ENCODE measurements at regions of chr16 and their contacts with region 1.

Region 1: GRCh38 chr16:12067714-12068401 is 91.3 kb downstream of the SNX29 start:
- DNase-seq: peak in 11 of 14 experiments; percentile 18 to 83 (median 52)
- ATAC-seq: peak; percentile 92
- H3K4me3 ChIP-seq: no peak overlapping the region
- H3K4me3 Mint-ChIP-seq: no peak overlapping the region
- H3K27ac ChIP-seq: no peak overlapping the region
- H3K27ac Mint-ChIP-seq: no peak overlapping the region
- H3K4me1 ChIP-seq: peaks cover 5% of the 10 kb centered on the region
- H3K4me1 Mint-ChIP-seq: peaks cover 11% of the 10 kb centered on the region
- H3K27me3 ChIP-seq: no peaks in the 10 kb centered on the region
- H3K27me3 Mint-ChIP-seq: no peaks in the 10 kb centered on the region
- CTCF ChIP-seq: peak; percentile 94

Region 2: DNA sequence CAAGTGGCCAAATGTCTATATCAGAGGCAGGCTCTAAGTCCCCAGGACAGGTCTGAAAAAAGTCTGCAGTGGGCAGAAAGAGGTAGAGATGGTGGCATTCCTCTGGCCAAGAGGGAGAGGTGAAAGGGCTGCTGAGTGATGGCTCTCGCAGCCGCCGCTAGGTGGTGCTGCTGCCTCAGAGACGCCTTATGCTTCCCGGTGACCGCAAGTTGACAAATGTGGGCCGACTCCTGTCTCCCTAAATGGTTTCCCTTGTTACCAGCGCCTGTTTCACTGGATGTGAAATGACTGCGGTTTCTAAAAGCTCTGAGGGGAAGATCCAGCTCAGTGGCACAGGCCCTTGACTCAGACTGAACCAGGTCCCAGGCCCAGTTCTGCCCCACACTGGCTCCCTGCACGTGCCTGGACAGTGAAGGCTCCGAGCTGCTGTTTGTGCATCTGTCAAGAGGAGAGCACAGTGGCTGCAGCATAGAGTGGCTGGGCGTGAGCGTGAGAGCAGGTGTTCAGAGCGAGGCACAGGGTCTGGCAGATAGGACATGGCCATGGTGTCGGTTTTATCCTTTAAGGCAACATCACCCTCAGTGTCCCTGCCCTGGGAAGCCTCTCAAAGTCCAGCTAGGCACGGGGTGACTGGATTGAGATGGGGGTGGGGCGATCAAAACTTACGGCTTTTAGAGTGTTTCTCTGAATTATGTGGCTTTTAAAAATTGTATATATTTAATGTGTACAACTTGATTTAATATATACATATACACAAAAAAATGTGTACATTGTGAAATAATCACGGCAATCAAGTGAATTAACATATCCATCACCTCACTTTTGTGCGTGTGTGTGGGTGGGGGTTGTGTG is 1103.6 kb before region 1 on chr16:
- CTCF ChIA-PET with region 1: no interaction called
- POLR2A ChIA-PET with region 1: no interaction called
- intact Hi-C with region 1: loop called in 1 of 2 experiments (anchors 1 kb)
- DNase-seq: peak; percentile 65 to 91 (median 78)
- ATAC-seq: peak; percentile 49
- H3K4me3 ChIP-seq: peak overlapping the region; percentile 9
- H3K4me3 Mint-ChIP-seq: peak overlapping the region; percentile 38
- H3K27ac ChIP-seq: no peak overlapping the region
- H3K27ac Mint-ChIP-seq: peak overlapping the region; percentile 76
- H3K4me1 ChIP-seq: peaks cover 28% of the 10 kb centered on the region
- H3K4me1 Mint-ChIP-seq: peaks cover 30% of the 10 kb centered on the region
- H3K27me3 ChIP-seq: no peaks in the 10 kb centered on the region
- H3K27me3 Mint-ChIP-seq: no peaks in the 10 kb centered on the region
- CTCF ChIP-seq: peak; percentile 99

Region 3: GRCh38 chr16:11407047-11407982 is 660.5 kb before region 1 on chr16:
- CTCF ChIA-PET with region 1: no interaction called
- POLR2A ChIA-PET with region 1: no interaction called
- intact Hi-C with region 1: loop called in 1 of 2 experiments (anchors 2 kb)
- DNase-seq: peak; percentile 40 to 81 (median 54)
- ATAC-seq: peak; percentile 78
- H3K4me3 ChIP-seq: no peak overlapping the region
- H3K4me3 Mint-ChIP-seq: no peak overlapping the region
- H3K27ac ChIP-seq: no peak overlapping the region
- H3K27ac Mint-ChIP-seq: no peak overlapping the region
- H3K4me1 ChIP-seq: no peaks in the 10 kb centered on the region
- H3K4me1 Mint-ChIP-seq: no peaks in the 10 kb centered on the region
- H3K27me3 ChIP-seq: no peaks in the 10 kb centered on the region
- H3K27me3 Mint-ChIP-seq: no peaks in the 10 kb centered on the region
- CTCF ChIP-seq: peak; percentile 69

Region 4: GRCh38 chr16:11851294-11852091 is 216.4 kb before region 1 on chr16 and contains the start of gene RSL1D1:
- CTCF ChIA-PET with region 1: no interaction called
- POLR2A ChIA-PET with region 1: interaction called, 4 read pairs
- intact Hi-C with region 1: loop called in 1 of 2 experiments (anchors 5 kb)
- DNase-seq: peak; percentile 87 to 98 (median 92)
- ATAC-seq: peak; percentile 85
- H3K4me3 ChIP-seq: peak within 1 kb of the TSS; percentile 75
- H3K4me3 Mint-ChIP-seq: peak within 1 kb of the TSS; percentile 97
- H3K27ac ChIP-seq: peak within 1 kb of the TSS; percentile 78 to 86
- H3K27ac Mint-ChIP-seq: peak within 1 kb of the TSS; percentile 96
- H3K4me1 ChIP-seq: peaks cover 42% of the 10 kb centered on the region
- H3K4me1 Mint-ChIP-seq: peaks cover 68% of the 10 kb centered on the region
- H3K27me3 ChIP-seq: no peaks in the 10 kb centered on the region
- H3K27me3 Mint-ChIP-seq: no peaks in the 10 kb centered on the region
- CTCF ChIP-seq: no peak
- total RNA-seq, gene RSL1D1: 224 to 237 TPM

Region 5: DNA sequence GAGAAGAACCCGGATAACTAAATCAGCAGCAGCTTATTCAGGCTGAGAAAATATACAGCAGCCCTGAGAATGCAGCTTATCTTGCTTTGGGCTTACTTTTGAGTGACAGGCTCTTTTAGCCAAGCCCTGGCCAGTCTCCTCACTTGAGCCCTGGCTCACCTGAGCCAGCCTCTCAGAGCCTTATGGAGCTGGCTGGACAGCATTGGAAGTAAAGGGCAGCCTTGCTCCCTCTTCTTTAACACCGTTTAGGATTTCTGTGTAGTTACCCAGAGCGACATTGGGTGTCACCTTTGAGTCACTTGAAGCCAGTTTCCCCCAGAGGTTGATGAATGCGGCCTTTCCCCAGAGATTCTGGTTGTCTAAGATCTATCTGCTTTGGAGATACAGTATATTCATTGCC is 118.3 kb before region 1 on chr16:
- CTCF ChIA-PET with region 1: interaction called, 8 read pairs
- POLR2A ChIA-PET with region 1: no interaction called
- intact Hi-C with region 1: loop called (anchors 1 to 2 kb)
- DNase-seq: peak in 4 of 14 experiments; percentile 5 to 52 (median 25)
- ATAC-seq: peak; percentile 48
- H3K4me3 ChIP-seq: no peak overlapping the region
- H3K4me3 Mint-ChIP-seq: no peak overlapping the region
- H3K27ac ChIP-seq: no peak overlapping the region
- H3K27ac Mint-ChIP-seq: no peak overlapping the region
- H3K4me1 ChIP-seq: no peaks in the 10 kb centered on the region
- H3K4me1 Mint-ChIP-seq: no peaks in the 10 kb centered on the region
- H3K27me3 ChIP-seq: no peaks in the 10 kb centered on the region
- H3K27me3 Mint-ChIP-seq: no peaks in the 10 kb centered on the region
- CTCF ChIP-seq: peak; percentile 21

Region 6: DNA sequence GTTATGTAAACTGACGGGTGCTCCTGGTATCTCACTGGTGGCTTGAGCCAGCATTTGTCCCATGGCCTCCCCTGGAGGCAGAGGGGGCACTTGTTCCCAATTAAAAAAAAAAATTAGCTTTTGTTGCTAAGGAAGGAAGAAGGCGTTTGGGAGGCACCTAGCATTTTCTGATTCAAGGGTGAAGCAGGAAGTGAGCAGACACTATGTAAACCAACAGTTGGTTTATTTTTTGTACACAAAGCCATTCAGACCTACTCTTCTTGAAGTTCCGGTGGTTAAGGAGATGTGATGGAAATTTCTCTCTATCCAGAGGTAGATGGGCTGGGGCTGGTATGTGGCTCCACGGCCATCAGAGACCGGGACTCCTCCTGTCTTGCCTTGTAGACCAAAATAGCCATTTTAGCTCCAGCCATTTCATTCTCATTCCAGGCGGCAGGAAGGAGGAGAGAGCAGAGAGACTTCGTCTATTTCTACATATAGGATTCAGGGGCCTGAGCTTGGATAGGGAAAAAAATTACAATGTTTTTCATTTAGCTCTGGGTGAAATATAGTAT is 11.6 kb after region 1 on chr16:
- CTCF ChIA-PET with region 1: interaction called, 13 read pairs
- POLR2A ChIA-PET with region 1: interaction called, 16 read pairs
- intact Hi-C with region 1: no loop called
- DNase-seq: peak in 4 of 14 experiments; percentile 29 to 68 (median 44)
- ATAC-seq: peak; percentile 30
- H3K4me3 ChIP-seq: peak overlapping the region; percentile 43
- H3K4me3 Mint-ChIP-seq: peak overlapping the region; percentile 79
- H3K27ac ChIP-seq: peak overlapping the region; percentile 66 to 71
- H3K27ac Mint-ChIP-seq: peak overlapping the region; percentile 87
- H3K4me1 ChIP-seq: peaks cover 81% of the 10 kb centered on the region
- H3K4me1 Mint-ChIP-seq: peaks cover 85% of the 10 kb centered on the region
- H3K27me3 ChIP-seq: no peaks in the 10 kb centered on the region
- H3K27me3 Mint-ChIP-seq: no peaks in the 10 kb centered on the region
- CTCF ChIP-seq: no peak

Region 7: DNA sequence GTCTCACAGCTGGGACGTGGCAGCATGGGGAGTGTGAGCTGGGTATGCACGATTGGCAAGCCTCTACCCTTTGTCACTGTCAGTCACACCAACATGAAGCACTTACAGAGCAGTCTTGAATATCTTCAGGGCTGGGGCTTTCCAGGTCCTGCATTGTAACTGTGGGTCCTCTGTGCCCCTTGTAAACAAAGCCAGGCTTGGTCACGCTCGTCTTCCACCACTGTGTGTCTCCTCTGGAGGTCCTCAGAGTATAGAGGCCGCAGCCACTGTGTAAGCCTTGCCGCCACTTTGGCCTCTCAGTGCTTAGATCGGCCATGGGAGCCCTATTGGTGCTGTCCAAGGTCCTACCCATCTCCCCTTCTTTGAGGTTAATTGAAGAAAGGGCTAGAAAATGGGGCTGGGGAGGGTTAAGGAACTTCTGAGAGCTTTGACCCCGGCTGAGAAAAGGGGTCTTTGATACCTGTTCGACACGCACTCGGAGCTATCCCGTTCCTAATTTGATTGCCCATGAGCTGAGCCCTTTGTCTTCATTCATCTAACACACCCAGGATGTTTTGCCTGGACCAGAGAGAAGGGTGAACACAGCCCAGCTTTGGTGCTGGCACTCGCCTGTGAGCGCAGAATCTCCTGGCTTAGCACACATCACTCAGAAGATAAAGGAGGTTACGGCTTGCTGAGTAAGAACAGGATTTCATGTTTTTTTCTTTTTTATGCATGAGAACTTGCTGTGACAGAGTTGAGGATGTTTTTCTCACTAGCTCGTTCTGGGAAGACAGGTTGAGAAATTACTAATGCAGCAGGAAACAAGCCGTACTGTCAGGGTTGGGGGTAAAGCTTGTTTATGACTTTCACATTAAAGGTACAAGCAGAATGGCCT is 467.9 kb after region 1 on chr16:
- CTCF ChIA-PET with region 1: no interaction called
- POLR2A ChIA-PET with region 1: no interaction called
- intact Hi-C with region 1: no loop called
- DNase-seq: peak in 5 of 14 experiments; percentile 7 to 29 (median 16)
- ATAC-seq: peak; percentile 51
- H3K4me3 ChIP-seq: no peak overlapping the region
- H3K4me3 Mint-ChIP-seq: peak overlapping the region; percentile 40
- H3K27ac ChIP-seq: no peak overlapping the region
- H3K27ac Mint-ChIP-seq: peak overlapping the region; percentile 74
- H3K4me1 ChIP-seq: peaks cover 57% of the 10 kb centered on the region
- H3K4me1 Mint-ChIP-seq: peaks cover 80% of the 10 kb centered on the region
- H3K27me3 ChIP-seq: no peaks in the 10 kb centered on the region
- H3K27me3 Mint-ChIP-seq: no peaks in the 10 kb centered on the region
- CTCF ChIP-seq: no peak

Measured in CD4-positive, alpha-beta T cell (primary cell).